Esophagus muscularis mucosa (tissue), 4 donors: ENCODE measurements at regions of chr4 and their contacts with region 1.

Region 1: DNA sequence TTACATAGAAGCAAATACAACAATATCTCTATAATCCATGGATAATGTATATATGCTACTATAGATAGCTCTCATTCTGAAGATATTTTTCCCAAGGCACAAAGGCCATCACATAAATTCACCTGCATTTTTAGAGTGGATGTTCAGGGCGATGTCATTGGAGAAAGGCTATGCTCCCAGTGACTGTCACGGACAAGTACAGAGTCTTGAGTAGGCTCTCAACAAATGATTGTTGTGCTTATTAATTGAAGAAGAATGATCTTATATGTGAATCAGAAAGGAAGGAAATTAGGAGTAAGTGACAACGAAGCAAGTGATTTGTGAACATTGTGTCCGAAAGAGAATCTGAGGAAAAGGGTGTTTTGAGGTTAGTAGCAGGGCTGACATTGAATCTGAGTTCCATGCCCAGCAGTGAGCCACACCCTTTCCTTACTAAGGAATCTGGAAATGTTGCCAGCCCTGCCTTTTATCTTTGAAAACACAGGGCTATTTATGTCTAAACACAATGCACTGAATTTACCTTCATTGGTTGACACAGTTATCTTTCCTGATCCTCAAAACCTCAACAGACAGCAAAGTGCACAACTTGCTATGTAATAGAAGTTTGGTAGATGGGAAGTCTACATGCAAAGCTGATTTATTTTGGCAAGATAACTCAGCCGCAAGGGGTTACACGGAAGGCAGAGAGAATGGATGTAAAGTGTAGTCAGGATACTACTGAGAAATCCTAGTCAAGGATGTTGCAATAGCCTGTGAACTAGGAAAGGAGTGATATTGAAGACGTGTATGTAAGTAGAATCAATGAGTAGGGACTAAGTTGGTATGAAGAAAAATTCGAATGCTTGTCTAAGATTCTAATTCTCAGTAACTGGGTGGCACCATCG is 50.4 kb downstream of the SORBS2 start:
- DNase-seq: peak; percentile 29
- H3K4me3 ChIP-seq: peak overlapping the region in 1 of 4 donors; percentile 11
- H3K27ac ChIP-seq: peak overlapping the region in 3 of 4 donors; percentile 13 to 42 (median 40)
- H3K4me1 ChIP-seq: peaks cover 0 to 27% (median 8%) of the 10 kb centered on the region in 4 donors
- H3K27me3 ChIP-seq: no peaks in the 10 kb centered on the region
- CTCF ChIP-seq: no peak
- EP300 ChIP-seq: no peak
- POLR2A ChIP-seq: no peak

Region 2: DNA sequence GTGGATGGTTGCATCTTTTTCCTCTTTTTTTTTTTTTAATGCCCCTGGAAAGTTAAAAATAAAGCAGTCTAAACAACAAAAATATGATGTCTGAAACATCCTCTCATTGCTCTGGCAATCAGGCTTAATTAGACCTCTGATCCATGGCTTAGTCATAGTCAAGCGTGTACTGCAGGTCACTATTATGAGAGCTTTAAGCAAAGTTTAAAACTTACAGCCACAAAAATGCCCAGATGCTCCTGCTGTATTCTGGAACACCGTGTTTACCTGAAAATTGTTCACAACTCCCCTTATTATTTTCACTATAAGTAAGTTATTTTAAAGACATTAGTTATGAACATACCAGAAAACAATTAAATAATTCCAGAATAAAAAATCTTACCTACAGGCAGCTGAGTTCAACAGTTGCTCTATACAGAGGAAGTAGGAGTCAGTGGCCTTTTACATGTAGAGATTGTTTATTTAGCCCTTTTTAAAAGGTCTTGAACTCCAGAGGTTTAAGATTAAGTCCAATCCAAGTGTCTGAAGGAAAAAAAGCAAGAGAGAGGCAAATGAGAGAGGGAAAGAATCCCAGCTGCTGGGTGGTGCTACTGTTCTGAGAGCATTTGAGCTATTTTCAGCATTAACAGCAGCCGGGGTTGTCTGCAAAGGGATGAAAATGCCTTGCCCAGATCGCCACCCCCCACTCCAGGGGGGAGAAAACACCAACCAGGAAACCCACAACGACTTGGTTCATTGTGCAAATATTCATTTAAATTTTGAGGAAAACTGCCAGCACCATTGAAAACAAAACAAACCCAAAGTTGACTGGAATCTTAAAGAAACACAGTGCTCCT is 13.5 kb after region 1 on chr4:
- intact Hi-C with region 1: loop called (anchors 1 kb)
- DNase-seq: no peak
- H3K4me3 ChIP-seq: peak overlapping the region; percentile 39 to 50 (median 42)
- H3K27ac ChIP-seq: peak overlapping the region; percentile 40 to 71 (median 62)
- H3K4me1 ChIP-seq: peaks cover 8 to 17% (median 13%) of the 10 kb centered on the region in 4 donors
- H3K27me3 ChIP-seq: no peaks in the 10 kb centered on the region
- CTCF ChIP-seq: no peak
- EP300 ChIP-seq: no peak
- POLR2A ChIP-seq: no peak